Ascending aorta (tissue), 2 donors: ENCODE measurements at regions of chr19 and their contacts with region 1.

Region 1: DNA sequence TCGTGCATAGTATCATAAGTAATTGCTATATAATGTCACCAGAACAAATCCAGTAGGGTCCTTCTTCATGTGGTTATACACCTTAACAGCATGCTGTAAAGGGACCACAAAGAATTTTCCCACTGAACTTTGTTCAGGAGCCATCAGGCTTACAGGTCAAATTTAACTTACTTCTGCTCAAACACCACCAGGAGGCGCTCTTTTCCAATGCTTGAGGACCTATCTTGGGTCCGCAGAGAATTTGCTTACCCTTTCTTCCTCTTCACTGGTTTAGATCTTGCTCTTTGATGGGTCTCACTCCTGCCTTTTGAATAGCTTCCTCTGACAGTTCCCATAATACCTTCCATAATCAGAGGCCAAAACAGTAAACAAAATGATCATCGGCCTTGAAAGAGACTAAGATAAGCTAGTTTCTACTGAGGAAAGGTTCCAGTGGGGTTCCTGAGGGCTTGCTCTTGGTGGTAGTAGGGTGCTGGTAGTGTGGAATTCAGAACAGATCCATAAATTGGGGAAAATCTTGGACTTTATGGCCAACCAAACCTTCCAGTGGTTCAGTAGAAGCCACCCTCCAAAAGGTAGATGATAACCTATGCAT is 37.4 kb downstream of the SCGB2B2 start:
- DNase-seq: no peak
- H3K4me3 ChIP-seq: no peak overlapping the region
- H3K27ac ChIP-seq: no peak overlapping the region
- H3K4me1 ChIP-seq: no peaks in the 10 kb centered on the region
- H3K27me3 ChIP-seq: no peaks in the 10 kb centered on the region
- CTCF ChIP-seq: peak; percentile 43 to 77 (median 48)

Region 2: DNA sequence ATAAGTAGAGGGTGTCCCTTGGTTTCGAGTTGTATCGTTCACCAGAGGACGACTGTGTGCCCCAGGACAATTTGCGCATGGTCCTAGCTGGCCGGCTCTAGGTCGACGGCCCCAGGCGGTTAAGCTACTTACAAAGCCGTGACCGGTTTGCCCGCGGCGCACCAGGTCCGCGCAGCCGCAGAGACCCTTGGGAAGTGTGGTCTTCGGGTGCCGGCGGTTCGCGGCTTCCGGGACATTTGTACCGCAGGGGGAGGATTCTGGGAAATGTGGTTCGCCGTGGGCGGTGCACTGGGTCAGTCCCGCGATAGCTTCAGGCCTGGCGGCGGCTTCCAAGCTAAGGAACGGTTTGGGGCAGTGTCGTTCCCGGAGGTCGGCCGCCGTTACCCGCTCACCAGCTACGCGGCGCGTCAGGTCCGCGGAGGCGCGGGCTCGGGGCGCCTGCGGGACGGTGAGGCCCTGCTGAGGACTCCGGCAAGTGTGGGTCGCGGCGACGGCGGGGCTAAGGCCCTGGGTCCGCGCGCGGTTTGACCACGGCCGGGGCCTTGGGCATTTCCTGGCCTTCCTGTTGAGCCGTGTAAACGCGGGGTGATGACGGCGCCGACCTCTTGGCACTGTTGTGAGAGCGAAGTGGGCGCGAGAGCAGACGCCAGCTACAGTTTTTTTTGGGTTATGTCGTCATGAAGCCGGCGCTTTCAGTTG is 37.9 kb after region 1 on chr19 and contains the start of gene ZNF302:
- intact Hi-C with region 1: no loop called
- DNase-seq: peak; percentile 86 to 98
- H3K4me3 ChIP-seq: peak within 1 kb of the TSS; percentile 83 to 85
- H3K27ac ChIP-seq: peak within 1 kb of the TSS; percentile 99
- H3K4me1 ChIP-seq: peaks cover 0 to 9% of the 10 kb centered on the region in 2 donors
- H3K27me3 ChIP-seq: no peaks in the 10 kb centered on the region
- CTCF ChIP-seq: no peak
- total RNA-seq, gene ZNF302: 42.0 TPM

Region 3: DNA sequence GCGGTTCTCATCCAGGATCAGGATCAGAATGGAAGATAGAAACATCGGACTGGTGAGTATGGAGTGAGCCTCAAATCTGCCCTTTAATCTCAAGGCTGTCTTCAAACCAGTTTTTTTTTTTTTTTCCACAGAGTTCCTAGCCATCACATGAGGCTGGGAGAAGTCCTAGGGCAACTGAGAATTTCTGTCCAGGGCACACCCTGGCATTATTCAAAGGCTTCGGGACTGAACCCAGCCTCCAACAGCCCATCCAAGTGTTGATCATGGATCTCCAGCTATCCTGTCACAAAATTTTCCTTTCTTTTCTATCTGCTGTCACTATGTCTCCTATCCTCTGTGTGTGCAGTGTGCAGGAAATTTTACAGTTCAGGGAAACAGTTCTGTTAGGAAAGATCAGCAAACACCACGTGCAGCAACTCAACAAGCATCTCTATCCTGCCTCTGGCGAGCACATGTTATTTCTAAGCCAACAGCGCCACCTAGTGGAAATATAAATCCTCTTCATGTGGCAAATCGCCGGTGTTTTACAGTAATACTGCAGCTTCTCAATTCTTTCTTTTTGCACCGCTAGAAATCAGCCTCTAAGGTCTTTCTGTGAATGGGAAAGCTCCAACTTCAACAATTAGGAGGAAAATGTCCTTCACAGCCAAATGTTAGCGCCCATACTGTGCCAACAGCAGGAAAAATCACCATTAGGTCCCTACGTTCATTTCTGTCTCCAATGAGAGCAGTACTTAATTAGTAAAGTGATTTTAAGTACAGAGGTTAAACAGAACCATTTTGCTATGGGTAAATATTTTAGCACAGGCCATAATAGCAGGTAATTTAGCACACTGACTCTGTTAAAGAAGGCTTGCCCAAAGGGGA is 73.0 kb after region 1 on chr19:
- intact Hi-C with region 1: loop called (anchors 1 kb)
- DNase-seq: peak in 1 of 2 donors; percentile 67
- H3K4me3 ChIP-seq: no peak overlapping the region
- H3K27ac ChIP-seq: no peak overlapping the region
- H3K4me1 ChIP-seq: no peaks in the 10 kb centered on the region
- H3K27me3 ChIP-seq: no peaks in the 10 kb centered on the region
- CTCF ChIP-seq: peak; percentile 57 to 79 (median 61)